ENCODE measurements at regions of chr16 and their contacts with region 1.

Region 1: DNA sequence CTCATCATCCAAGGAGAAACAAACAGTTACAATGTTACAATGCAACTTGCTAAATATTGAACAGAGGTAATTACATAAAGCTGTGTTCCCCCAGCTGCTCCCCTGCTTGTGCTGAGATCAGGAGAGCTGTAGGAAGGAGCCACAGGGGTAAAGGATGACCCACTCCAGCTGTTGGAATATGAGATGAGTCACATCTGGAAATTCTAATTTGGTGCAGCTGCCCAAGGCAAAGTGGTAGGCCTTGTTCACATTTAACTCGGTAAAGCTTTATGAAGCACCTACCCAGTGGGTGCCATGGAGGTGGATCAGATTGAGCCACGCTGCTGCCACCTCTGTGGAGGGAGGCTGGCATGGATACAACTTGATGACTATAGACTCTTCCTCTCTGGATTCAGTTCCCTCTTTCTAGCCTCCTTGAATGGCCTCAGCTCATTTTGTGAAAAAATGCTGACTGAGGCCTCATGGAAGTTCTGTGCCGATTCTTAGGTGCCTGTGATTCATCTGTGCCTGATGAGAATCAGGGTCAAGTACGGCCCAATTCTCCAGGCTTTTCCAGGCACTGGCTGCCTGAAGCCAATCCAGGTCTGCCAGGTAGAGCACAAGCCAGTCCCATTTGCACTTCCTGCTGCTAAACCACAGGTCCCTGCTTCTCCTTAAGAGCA is 7.4 kb downstream of the ZNF689 start:
- DNase-seq: no peak
- ATAC-seq: no peak
- H3K4me3 Mint-ChIP-seq: no peak overlapping the region
- H3K27ac Mint-ChIP-seq: no peak overlapping the region
- H3K4me1 Mint-ChIP-seq: peaks cover 12% of the 10 kb centered on the region
- H3K27me3 Mint-ChIP-seq: no peaks in the 10 kb centered on the region

Region 2: DNA sequence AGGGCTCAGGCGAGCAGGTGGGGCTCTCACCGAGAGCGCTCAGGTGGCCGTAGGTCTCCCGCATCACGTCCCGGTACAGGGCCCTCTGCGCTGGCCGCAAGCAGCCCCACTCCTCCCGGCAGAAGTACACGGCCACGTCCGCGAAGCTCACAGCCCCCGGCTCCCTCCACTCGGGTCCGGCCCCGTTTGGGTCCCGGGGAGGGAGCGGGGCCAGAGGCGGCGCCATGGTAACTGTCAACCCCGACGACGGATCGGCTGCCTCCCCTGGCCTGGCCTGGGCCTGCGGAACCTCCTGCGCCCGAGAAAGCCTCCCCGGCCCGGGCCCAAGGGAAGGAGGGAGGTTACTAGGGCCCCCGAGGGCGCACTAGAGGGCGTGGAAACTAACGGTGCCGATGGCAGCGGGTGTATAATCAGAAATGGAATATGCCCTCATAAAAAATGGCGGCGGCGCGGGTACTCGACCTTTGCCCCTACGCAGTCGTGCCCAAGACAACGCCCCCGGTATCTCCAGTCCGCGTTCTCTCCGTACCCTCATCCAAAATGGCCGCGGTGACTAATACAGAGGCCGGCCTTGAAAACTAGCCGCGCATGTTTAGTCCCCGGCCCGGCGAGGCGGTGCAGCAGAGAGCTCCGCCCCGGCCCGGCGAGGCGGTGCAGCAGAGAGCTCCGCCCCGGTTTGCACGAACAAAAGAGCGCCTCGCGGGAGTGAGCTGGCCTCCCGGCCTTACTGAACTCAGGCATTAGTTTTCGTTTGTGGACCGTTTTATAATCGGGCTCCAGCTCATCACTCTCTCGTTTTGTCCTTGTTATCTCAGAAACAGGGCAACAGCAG is 44.6 kb before region 1 on chr16 and contains the start of gene ZNF764:
- CTCF ChIA-PET with region 1: interaction called, 19 read pairs
- DNase-seq: peak; percentile 99
- ATAC-seq: peak; percentile 96
- H3K4me3 Mint-ChIP-seq: peak within 1 kb of the TSS; percentile 83
- H3K27ac Mint-ChIP-seq: peak within 1 kb of the TSS; percentile 87
- H3K4me1 Mint-ChIP-seq: peaks cover 41% of the 10 kb centered on the region
- H3K27me3 Mint-ChIP-seq: no peaks in the 10 kb centered on the region
- total RNA-seq, gene ZNF764: 14.0 to 15.6 TPM

Region 3: DNA sequence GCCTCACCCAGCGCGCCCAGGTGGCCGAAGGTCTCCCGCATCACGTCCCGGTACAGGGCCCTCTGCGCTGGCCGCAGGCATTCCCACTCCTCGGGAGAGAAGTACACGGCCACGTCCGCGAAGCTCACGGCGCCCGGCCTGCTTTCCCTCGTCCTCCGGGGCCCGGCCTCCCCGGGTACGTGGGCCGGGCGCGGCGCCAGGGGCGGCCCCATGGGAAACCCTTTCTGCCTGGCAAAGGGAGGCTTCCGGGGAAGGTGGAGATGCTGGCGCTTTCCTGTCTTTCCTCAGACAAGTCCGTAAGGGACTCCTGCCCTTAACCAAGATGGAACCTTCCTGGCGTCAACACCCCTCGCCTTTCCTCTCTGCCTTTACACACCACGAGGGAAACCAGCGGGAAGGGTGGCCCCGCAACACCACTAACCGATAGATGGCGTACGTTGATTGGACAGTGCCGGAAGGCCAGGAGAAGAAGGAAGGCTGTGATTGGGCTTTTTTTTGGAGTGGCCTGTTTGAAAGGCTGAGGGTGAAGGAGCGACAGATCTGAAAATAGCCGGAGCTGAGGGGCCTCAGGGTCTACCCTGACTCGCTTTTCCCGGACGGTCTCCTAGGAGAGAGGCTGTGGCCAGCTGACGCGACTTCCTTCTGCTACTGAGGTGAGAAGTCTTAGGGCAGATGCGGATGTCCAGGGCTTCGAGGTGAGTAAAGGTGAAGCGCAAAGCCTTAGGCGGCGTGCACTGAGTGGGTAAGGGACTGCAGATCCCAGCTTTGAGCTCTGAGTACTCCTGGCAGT is 17.2 kb before region 1 on chr16 and contains the start of gene ZNF785:
- CTCF ChIA-PET with region 1: interaction called, 31 read pairs
- DNase-seq: peak; percentile 97
- ATAC-seq: peak; percentile 98
- H3K4me3 Mint-ChIP-seq: peak within 1 kb of the TSS; percentile 83
- H3K27ac Mint-ChIP-seq: peak within 1 kb of the TSS; percentile 92
- H3K4me1 Mint-ChIP-seq: peaks cover 44% of the 10 kb centered on the region
- H3K27me3 Mint-ChIP-seq: no peaks in the 10 kb centered on the region
- total RNA-seq, gene ZNF785: 18.9 to 21.2 TPM

Measured in activated CD8-positive, alpha-beta memory T cell treated with anti-CD3 and anti-CD28 coated beads, Interleukin-2, amount 10 ng/mL, durations not matched to agents 7 days and 5 days (primary cell).